ENCODE measurements at regions of chr19 and their contacts with region 1.

Region 1: DNA sequence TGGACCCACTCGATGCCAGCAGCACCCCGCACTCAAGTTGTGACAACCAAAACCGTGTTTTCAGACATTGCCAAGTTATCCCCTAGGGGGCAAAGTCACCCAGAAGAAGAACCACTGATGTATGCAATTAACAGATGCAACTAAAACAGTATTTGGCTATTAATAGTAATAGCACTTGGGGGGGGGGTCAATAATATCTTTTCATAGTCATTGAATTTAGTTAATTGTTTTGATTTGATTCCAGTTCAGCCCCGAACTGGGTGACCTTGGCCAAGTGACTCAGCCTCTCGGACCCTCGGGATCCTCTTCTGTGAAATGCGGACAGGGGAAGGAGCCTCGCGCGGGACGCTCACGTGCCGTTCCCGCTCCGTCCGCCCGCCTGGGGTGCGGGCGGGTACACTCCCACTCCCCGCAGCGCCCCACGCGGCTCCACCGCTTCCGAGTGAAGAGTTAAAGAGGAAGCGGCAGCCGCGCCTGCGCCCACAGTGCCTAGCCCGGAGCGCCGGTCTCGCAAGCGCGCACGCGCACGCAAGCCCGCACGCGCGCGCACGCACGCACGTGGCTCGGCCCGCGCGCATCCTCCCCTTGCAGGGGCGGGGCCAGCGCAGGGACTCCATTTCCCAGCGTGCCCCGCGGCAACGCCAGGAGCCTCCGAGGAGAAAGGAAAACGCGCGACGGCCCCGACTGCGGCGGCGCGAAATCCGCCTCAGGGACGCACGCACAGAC is 449 bp upstream of the DAZAP1 start:
- DNase-seq: peak; percentile 99
- H3K4me3 Mint-ChIP-seq: peak overlapping the region; percentile 67
- H3K27ac Mint-ChIP-seq: peak overlapping the region; percentile 62
- H3K4me1 Mint-ChIP-seq: peaks cover 35% of the 10 kb centered on the region
- H3K27me3 Mint-ChIP-seq: peaks cover 2% of the 10 kb centered on the region

Region 2: DNA sequence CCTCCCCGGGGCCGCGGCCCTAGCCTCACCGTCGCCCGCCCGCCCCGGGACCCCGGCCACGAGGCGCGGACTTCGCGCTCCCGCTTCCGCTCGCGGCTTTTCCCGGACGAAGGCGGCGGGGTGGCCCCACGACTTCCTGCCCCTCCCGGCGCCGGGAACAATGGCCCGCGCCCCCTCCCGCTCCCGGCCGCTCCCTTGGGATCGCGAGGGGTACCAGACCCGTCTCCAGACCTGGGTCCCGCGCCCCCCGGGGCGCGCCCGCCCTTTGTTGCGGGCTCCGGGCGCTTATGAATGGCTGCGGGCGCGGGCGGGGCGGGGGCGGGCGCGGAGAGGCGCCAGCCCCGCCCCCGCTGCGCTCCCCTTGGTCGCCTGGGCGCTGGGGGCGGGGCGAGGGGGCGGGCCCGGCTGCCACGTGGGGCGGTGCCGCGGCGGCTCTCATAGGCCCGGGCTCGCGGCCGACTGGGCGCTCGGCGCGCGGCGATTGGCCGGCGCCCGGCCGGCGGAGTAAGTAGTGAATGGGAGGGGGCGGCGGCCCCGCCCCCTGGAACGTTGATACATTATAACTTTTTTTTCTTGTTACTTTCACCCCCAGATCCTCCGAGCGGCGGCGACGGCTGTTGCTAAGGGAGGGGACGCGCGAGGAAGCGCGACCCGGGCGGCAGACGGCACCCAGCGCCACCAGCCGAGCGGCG is 157.5 kb before region 1 on chr19:
- CTCF ChIA-PET with region 1: interaction called, 6 read pairs
- POLR2A ChIA-PET with region 1: no interaction called
- intact Hi-C with region 1: loop called (anchors 2 kb)
- DNase-seq: peak; percentile 97
- H3K4me3 Mint-ChIP-seq: peak overlapping the region; percentile 71
- H3K27ac Mint-ChIP-seq: peak overlapping the region; percentile 82
- H3K4me1 Mint-ChIP-seq: peaks cover 12% of the 10 kb centered on the region
- H3K27me3 Mint-ChIP-seq: no peaks in the 10 kb centered on the region

Region 3: DNA sequence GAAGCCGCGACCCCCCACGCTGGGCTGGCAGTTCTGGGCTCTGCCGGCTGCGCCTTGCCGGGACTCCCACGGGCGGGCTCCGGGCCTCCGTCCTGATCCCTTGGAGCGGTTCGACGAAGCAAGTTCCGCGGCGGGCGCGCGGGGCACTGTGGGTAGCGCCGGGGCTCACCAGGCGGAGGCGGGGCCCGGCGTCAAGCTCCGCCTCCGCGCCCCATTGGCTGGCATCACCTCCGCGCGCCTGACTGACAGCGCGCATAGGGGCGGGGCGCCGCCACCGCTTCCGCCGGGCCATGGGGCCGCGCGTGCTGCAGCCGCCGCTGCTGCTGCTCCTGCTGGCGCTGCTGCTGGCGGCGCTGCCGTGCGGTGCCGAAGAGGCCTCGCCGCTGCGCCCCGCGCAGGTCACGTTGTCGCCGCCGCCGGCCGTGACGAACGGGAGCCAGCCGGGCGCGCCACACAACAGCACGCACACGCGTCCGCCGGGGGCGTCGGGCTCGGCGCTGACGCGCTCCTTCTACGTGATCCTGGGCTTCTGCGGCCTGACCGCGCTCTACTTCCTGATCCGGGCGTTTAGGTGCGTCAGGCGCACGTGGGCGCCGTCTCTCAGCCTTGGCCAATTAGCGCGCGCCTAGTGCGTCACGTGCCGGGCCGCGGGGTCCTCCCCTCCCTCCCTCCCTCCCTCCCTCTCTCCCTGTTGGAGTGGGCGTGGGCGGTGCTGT is 131.5 kb before region 1 on chr19 and contains the start of gene FAM174C:
- CTCF ChIA-PET with region 1: no interaction called
- POLR2A ChIA-PET with region 1: no interaction called
- intact Hi-C with region 1: loop called (anchors 1 kb)
- DNase-seq: peak; percentile 97
- H3K4me3 Mint-ChIP-seq: peak within 1 kb of the TSS; percentile 86
- H3K27ac Mint-ChIP-seq: peak within 1 kb of the TSS; percentile 95
- H3K4me1 Mint-ChIP-seq: peaks cover 56% of the 10 kb centered on the region
- H3K27me3 Mint-ChIP-seq: no peaks in the 10 kb centered on the region
- total RNA-seq, gene FAM174C: 74.8 to 76.1 TPM

Region 4: DNA sequence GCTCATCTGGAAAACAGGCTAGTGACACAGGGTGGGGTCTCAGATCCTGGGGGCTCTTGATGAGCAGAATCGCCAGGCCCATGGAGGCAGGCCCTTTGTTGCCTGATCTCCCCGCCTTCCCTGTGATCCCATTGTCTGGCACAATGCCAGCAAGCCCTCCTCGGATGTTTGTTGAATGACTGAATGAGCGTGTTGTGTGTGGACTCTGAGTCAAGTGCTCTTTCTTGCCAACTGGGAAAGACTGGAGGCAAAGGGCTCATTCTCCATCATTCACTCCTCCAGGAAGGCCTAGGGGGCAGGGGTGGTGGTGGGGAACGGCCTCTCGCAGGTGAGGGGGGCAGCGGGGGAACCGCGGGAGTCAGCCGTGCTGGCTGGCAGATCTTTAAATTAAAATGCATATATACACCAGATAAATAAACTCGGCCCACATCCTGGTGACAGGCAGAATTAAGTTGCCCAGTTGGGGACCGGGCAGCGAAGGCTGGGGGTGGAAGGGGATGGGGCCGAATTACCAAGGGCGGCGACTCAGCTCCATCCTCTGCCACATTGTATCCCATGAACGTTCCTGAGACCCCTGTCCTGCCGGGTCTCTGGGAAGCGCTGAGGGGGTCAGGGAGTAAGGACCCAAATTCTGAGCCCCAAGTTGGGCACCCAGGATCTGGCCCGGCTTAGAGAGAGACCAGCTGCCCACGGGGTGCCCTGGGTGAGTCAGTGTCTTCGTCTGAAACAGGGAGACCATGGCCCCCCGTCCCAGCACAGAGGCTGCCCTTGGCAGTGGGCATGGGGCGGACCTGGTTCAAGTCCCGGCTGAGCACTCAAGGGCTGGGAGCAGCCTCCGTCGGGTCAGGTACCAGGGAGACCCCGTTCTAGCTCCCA is 96.7 kb before region 1 on chr19:
- CTCF ChIA-PET with region 1: no interaction called
- POLR2A ChIA-PET with region 1: no interaction called
- intact Hi-C with region 1: no loop called
- DNase-seq: no peak
- H3K4me3 Mint-ChIP-seq: no peak overlapping the region
- H3K27ac Mint-ChIP-seq: no peak overlapping the region
- H3K4me1 Mint-ChIP-seq: no peaks in the 10 kb centered on the region
- H3K27me3 Mint-ChIP-seq: peaks cover 2% of the 10 kb centered on the region

Region 5: DNA sequence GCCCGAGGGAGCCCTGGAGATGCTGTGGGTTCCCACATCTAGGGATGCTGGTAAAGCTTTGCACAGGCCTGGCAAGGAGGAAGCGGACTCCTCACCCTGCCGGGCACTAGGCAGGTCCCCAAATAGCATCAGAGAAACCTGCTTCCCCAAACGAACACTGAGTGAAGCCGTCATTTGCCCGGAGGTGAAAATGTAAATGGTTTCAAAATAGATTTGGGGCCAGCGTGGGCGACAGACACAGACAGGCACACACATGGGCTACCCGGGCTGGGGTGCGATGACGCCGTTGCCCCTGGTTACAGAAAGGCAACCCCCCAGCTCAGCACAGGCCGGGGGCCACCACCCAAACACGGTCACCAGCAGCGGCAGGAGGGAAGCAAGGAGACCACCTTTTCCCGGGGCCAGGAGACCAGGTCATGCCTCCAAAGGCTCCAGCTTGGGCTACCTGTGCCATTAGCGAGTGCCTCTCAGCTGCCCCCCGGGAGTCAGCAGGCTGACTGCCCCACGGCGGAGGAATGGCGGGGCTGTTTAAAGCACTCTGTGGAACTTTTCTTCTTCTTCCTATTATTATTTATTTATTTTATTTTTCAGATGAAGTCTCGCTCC is 70.8 kb before region 1 on chr19:
- CTCF ChIA-PET with region 1: no interaction called
- POLR2A ChIA-PET with region 1: no interaction called
- intact Hi-C with region 1: no loop called
- DNase-seq: no peak
- H3K4me3 Mint-ChIP-seq: no peak overlapping the region
- H3K27ac Mint-ChIP-seq: no peak overlapping the region
- H3K4me1 Mint-ChIP-seq: no peaks in the 10 kb centered on the region
- H3K27me3 Mint-ChIP-seq: peaks cover 2% of the 10 kb centered on the region

Region 6: DNA sequence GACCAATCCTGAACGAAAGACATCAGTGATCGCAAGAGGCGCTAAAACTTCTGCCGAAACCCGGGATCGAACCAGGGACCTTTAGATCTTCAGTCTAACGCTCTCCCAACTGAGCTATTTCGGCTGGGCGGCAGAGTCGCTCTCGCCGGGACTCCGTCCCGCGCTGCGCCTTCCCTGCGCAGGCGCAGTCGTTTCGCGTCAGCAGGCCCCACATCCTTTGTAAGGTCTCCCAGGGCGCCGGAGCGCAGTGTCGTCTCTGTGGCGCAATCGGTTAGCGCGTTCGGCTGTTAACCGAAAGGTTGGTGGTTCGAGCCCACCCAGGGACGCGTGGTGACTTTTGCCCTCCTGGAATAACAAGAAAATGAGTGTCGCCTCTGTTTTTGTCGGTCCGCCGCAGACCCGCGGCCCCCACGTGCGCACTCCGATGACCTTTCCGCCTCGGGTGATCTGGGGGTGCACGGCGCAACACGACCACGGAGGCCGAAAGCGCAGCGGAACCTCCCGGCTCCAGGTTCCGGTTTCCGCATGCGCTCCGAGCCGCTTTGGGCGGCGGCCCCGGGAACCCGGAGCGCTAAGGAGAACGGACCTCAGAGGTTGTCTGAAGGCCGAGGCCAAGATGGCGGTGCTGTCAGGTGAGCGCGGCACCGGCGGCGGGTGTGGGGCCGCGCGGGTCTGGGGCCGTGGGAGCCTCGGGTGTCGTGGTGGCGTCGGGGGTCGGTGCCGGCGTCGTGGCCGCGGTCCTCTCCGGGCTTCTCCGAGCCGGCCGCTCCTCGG is 23.4 kb before region 1 on chr19 and contains the start of gene NDUFS7:
- CTCF ChIA-PET with region 1: interaction called, 3 read pairs
- POLR2A ChIA-PET with region 1: interaction called, 3 read pairs
- intact Hi-C with region 1: loop called (anchors 1 kb)
- DNase-seq: peak; percentile 95
- H3K4me3 Mint-ChIP-seq: peak within 1 kb of the TSS; percentile 80
- H3K27ac Mint-ChIP-seq: peak within 1 kb of the TSS; percentile 97
- H3K4me1 Mint-ChIP-seq: peaks cover 23% of the 10 kb centered on the region
- H3K27me3 Mint-ChIP-seq: peaks cover 4% of the 10 kb centered on the region
- total RNA-seq, gene NDUFS7: 117 to 119 TPM

Region 7: GRCh38 chr19:1438035-1438932 is 31.3 kb after region 1 on chr19 and contains the start of gene RPS15:
- CTCF ChIA-PET with region 1: interaction called, 4 read pairs
- POLR2A ChIA-PET with region 1: no interaction called
- intact Hi-C with region 1: loop called (anchors 2 kb)
- DNase-seq: peak; percentile 97
- H3K4me3 Mint-ChIP-seq: peak within 1 kb of the TSS; percentile 99
- H3K27ac Mint-ChIP-seq: peak within 1 kb of the TSS; percentile 98
- H3K4me1 Mint-ChIP-seq: peaks cover 36% of the 10 kb centered on the region
- H3K27me3 Mint-ChIP-seq: no peaks in the 10 kb centered on the region
- total RNA-seq, gene RPS15: 1,642 to 1,717 TPM

Region 8: DNA sequence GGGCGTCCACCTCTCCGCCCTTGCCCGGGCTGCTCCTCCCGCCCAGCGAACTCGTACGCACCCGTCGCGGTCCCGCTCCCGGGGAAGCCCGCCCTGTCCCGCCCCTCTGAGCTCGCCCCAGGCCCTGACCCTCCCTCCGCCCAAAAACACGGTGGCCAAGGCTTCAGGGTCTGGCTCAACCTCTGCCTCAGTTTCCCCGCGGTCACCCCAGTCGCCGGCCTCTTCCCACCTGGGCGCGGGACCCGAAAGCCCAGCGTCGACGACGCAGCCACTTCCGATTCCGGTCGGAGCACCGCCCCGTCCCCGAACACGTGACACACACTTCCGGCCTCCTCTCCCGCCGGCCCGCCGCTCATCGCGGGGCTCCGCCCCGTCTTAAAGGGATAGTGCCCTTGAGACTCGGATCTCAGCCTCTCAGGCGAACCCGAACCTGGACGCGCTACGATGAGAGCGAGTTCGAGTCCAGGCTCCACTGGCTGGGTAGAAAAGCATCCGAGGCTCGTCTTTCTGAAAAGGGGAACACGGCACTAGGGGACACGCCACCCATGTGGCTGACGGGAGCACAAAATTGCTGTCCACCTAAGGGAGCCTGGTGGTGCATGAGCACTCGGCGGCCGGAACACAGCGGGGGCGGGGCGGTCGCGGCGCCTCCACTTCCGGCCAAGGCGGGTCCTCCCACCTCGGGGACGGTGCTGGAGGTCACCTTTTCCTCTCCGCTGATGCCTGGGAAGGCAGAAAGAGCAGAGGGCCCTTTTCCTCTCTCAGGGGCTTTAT is 72.2 kb after region 1 on chr19 and contains the start of gene C19orf25:
- CTCF ChIA-PET with region 1: no interaction called
- POLR2A ChIA-PET with region 1: no interaction called
- intact Hi-C with region 1: no loop called
- DNase-seq: peak; percentile 96
- H3K4me3 Mint-ChIP-seq: peak within 1 kb of the TSS; percentile 97
- H3K27ac Mint-ChIP-seq: peak within 1 kb of the TSS; percentile 91
- H3K4me1 Mint-ChIP-seq: peaks cover 9% of the 10 kb centered on the region
- H3K27me3 Mint-ChIP-seq: no peaks in the 10 kb centered on the region
- total RNA-seq, gene C19orf25: 24.4 to 26.9 TPM

Region 9: DNA sequence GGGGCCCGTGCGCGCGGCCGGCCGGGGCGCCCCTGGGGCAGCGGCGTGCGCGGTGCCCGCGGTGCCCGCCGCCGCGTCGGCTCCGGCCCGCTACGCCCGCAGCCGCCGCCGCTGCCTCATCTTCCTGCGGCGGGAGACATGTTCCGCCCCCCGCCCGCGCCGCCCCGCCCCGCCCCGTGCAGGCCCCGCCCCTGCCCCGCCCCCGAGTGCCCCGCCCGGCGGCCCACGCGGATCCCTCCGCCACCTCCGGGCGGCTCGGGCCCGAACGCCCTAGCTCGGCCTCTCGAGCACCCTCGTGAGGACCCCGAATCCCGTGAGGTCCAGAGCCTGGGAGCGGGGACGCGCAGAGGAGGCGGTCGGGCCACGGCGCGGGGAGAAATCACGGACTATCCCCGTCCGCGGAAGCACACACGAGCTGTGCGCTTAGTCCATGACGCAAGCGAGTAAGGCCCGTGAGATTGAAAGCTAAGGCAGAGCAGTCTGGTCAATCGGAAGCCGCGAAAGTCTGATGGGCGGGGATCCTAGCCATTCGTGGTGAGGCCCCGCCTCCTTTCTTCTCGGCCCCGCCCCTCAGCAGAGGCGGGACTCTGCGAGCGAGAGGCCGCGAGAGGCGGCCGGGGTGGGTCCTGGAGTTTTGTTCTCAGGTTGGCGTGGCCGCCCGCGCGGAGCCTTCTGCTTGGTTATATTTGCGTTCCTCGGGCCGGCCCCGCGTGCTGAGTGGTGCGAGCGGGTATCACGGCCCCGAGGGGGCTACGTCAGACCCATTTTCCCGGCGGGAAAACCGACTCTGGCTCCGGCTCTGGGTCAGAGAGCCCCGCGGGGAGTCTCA is 245.7 kb after region 1 on chr19 and contains the start of gene TCF3:
- CTCF ChIA-PET with region 1: no interaction called
- POLR2A ChIA-PET with region 1: no interaction called
- intact Hi-C with region 1: loop called (anchors 1 kb)
- DNase-seq: peak; percentile 99
- H3K4me3 Mint-ChIP-seq: peak within 1 kb of the TSS; percentile 84
- H3K27ac Mint-ChIP-seq: peak within 1 kb of the TSS; percentile 83
- H3K4me1 Mint-ChIP-seq: peaks cover 29% of the 10 kb centered on the region
- H3K27me3 Mint-ChIP-seq: no peaks in the 10 kb centered on the region
- total RNA-seq, gene TCF3: 88.9 to 95.5 TPM

Measured in activated CD4-positive, alpha-beta memory T cell treated with anti-CD3 and anti-CD28 coated beads for 36 hours (primary cell).